Mammary epithelial cell (primary cell): ENCODE measurements at regions of chr1 and their contacts with region 1.

Region 1: DNA sequence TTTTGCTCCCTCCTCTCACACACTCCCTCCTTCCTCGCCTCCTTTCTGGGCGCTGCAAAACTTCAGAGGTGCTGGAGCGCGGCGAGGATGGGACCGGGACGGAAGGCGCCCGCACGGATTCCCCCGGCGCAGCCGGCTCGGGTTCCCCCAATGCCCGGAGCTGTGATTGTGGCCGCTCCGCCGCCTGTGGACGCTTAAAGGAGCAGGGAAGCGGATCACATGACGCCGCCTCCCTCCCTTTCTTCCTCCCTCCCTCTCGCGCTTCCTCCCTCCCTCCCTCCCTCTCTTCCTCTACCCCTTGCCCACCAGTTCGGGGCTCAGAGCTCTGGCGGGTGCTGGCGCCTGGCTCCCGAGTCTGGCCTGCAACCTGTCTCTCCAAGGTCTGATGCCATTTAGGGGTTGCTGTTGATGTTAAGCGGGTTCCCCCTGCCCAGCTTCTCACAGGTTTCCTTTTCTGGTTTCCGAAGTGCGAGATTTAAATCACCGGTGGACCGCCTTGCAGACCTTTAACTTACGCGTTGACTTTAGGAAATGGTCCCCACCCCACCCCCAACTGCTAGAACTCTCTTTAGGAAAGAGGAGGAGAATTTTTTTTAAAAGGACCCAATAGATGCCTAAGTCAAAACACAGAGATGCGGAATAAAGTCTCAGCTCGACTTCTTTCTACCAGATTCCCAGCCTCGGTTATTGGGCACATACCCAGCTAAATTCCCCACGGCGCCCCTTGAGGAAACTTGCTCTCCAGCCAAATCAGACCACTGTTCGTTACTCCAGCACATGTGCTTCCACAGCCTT is at the start of gene WLS:
- DNase-seq: peak; percentile 70
- H3K4me3 ChIP-seq: peak within 1 kb of the TSS; percentile 78 to 100 (median 96)
- H3K27ac ChIP-seq: peak within 1 kb of the TSS; percentile 82
- H3K4me1 ChIP-seq: peaks cover 22% of the 10 kb centered on the region
- H3K27me3 ChIP-seq: no peaks in the 10 kb centered on the region
- CTCF ChIP-seq: no peak
- total RNA-seq, gene WLS: 93.9 to 113 TPM

Region 2: DNA sequence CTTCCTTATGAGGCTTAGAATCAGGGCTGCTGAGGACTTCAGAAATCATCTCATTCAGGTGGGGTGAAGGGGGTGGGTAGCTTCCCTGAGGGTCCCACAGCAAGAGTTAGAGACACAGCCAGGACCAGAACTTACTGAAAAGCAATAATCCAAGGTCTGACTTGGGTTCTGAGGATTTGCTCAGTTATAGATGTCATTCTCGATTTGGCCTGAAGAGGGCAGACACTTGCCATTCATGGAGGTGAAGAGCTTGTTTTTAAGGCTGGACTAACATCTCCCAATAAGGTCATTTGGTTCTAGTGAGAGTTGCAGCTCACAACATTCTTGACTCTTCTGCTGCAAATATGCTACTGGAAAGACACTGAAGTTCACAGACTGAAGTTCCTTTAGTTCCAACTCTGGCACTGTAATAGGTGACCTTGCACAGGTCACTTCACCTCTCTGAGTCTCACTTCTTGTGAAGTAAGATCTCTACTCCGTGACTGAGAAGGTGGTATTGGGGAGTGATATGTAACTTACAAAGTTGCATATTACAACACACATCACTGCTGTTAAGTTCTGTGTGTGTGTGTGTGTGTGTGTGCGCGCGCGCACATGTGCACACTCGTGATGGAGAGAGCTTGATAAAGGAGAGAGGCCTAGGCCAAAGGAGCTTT is 112.3 kb before region 1 on chr1:
- CTCF ChIA-PET with region 1: no interaction called
- dilution Hi-C with region 1: no loop called
- in situ Hi-C with region 1: no loop called
- intact Hi-C with region 1: loop called (anchors 1 kb)
- DNase-seq: peak; percentile 64
- H3K4me3 ChIP-seq: no peak overlapping the region
- H3K27ac ChIP-seq: no peak overlapping the region
- H3K4me1 ChIP-seq: no peaks in the 10 kb centered on the region
- H3K27me3 ChIP-seq: no peaks in the 10 kb centered on the region
- CTCF ChIP-seq: peak; percentile 76 to 78

Region 3: DNA sequence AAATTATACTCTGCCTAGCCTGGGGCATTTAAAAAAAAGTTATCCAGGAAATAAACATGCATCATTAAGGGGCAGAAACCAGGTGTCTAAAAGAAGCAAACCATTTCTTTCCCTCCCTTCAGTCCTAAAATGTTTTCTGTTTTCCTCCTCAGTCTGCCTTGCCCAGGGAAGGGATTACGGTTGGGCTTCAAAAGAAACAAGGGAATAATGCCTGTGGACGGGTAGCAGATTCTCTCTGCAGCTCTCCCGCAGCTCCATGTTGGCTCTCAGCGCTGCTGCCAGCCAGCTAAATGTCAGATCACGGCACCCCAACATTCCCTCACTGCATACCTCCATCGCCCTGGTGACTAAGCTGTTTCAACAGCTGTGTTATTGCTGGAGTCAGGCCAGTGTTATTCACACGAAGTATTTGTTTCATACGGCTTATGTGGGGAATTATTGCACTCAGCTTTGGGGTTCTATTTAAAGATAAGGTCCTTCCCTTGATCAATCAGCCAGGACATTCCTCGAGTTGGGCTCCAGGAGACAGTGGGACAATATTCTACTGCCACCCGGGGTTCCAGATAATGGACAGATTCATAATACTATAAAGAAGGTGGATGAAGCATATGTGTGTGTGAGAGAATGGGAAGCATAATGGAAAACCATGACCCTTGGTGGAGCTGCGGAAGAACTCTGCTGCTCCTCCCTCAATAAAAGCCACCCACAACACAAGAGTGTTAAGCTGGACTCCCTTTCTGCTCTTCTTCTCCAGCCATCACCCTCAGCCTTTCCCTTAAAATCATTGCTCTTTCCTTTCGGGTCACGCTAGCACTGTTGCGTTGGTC is 58.4 kb before region 1 on chr1:
- CTCF ChIA-PET with region 1: no interaction called
- dilution Hi-C with region 1: no loop called
- in situ Hi-C with region 1: no loop called
- intact Hi-C with region 1: loop called (anchors 1 kb)
- DNase-seq: peak; percentile 93
- H3K4me3 ChIP-seq: peak overlapping the region in 1 of 3 experiments; percentile 31
- H3K27ac ChIP-seq: peak overlapping the region; percentile 34
- H3K4me1 ChIP-seq: peaks cover 49% of the 10 kb centered on the region
- H3K27me3 ChIP-seq: no peaks in the 10 kb centered on the region
- CTCF ChIP-seq: no peak

Region 4: GRCh38 chr1:68269637-68270426 is 37.3 kb after region 1 on chr1:
- CTCF ChIA-PET with region 1: no interaction called
- dilution Hi-C with region 1: no loop called
- in situ Hi-C with region 1: no loop called
- intact Hi-C with region 1: loop called (anchors 1 kb)
- DNase-seq: peak; percentile 46
- H3K4me3 ChIP-seq: no peak overlapping the region
- H3K27ac ChIP-seq: no peak overlapping the region
- H3K4me1 ChIP-seq: peaks cover 8% of the 10 kb centered on the region
- H3K27me3 ChIP-seq: no peaks in the 10 kb centered on the region
- CTCF ChIP-seq: no peak

Region 5: GRCh38 chr1:68346188-68346808 is 113.7 kb after region 1 on chr1:
- CTCF ChIA-PET with region 1: no interaction called
- dilution Hi-C with region 1: no loop called
- in situ Hi-C with region 1: no loop called
- intact Hi-C with region 1: loop called (anchors 1 kb)
- DNase-seq: peak; percentile 18
- H3K4me3 ChIP-seq: no peak overlapping the region
- H3K27ac ChIP-seq: no peak overlapping the region
- H3K4me1 ChIP-seq: no peaks in the 10 kb centered on the region
- H3K27me3 ChIP-seq: no peaks in the 10 kb centered on the region
- CTCF ChIP-seq: peak; percentile 43 to 48

Region 6: DNA sequence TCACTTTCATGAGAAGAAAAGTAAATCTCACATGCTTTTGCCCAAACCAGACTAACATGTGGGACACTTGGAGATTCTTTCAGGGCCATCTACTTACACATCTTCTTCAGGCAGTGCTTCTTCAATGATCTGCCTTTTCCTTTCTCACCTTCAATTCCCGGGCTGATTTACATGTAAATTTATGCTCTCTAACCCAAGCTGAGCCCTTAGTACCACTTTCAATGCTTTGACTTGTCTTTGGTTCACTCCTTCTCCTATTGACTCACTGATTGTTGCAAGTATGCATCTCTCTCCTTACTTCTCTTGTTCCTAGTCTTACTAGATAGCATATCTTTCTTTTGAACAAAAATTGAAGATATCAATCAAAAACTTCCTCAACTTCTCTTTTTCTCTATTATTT is 418.6 kb after region 1 on chr1:
- CTCF ChIA-PET with region 1: no interaction called
- dilution Hi-C with region 1: no loop called
- in situ Hi-C with region 1: no loop called
- intact Hi-C with region 1: no loop called
- DNase-seq: no peak
- H3K4me3 ChIP-seq: no peak overlapping the region
- H3K27ac ChIP-seq: no peak overlapping the region
- H3K4me1 ChIP-seq: no peaks in the 10 kb centered on the region
- H3K27me3 ChIP-seq: no peaks in the 10 kb centered on the region
- CTCF ChIP-seq: no peak